Lower lobe of right lung (tissue), 2 donors: ENCODE measurements at regions of chr3 and their contacts with region 1.

Region 1: GRCh38 chr3:46280105-46280797 is 38.0 kb downstream of the CCR3 start:
- DNase-seq: no peak
- ATAC-seq: peak in 1 of 2 donors; percentile 58
- H3K4me3 ChIP-seq: no peak overlapping the region
- H3K27ac ChIP-seq: no peak overlapping the region
- H3K4me1 ChIP-seq: peaks cover 42% of the 10 kb centered on the region
- H3K27me3 ChIP-seq: no peaks in the 10 kb centered on the region
- CTCF ChIP-seq: no peak

Region 2: DNA sequence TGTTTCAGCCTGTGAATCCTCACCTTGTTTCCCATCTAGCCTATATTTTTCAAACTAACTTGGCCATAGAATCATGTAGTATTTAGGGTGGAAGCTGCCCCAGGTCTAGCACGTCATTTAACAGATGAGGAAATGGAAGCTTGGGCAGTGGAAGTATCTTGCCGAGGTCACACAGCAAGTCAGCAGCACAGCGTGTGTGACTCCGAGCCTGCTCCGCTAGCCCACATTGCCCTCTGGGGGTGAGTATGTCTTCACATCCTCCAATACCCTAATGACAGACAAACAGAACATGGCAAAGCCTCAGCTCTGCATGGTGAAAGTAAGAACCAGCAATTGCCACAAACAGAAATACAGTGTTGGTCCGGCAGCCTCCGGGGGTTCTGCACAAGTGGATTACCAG is 88.3 kb after region 1 on chr3:
- intact Hi-C with region 1: loop called (anchors 10 kb)
- DNase-seq: peak; percentile 78
- ATAC-seq: peak; percentile 86 to 91
- H3K4me3 ChIP-seq: no peak overlapping the region
- H3K27ac ChIP-seq: no peak overlapping the region
- H3K4me1 ChIP-seq: peaks cover 43% of the 10 kb centered on the region
- H3K27me3 ChIP-seq: no peaks in the 10 kb centered on the region
- CTCF ChIP-seq: peak; percentile 33